ENCODE measurements at regions of chr19 and their contacts with region 1.

Region 1: GRCh38 chr19:39970675-39971379 is at the start of gene PSMC4:
- DNase-seq: peak; percentile 97 to 98
- ATAC-seq: peak; percentile 98 to 99
- H3K4me3 ChIP-seq: peak within 1 kb of the TSS; percentile 86 to 98 (median 94)
- H3K27ac ChIP-seq: peak within 1 kb of the TSS; percentile 97 to 99 (median 99)
- H3K4me1 ChIP-seq: peaks cover 21 to 23% of the 10 kb centered on the region in 2 donors
- H3K27me3 ChIP-seq: no peaks in the 10 kb centered on the region
- CTCF ChIP-seq: peak; percentile 24 to 81 (median 71)
- POLR2A ChIP-seq: peak; percentile 92 to 97
- total RNA-seq, gene PSMC4: 165 to 238 (median 219) TPM

Region 2: GRCh38 chr19:39539519-39540332 is 431.1 kb before region 1 on chr19 and contains the start of gene EID2:
- in situ Hi-C with region 1: no loop called
- intact Hi-C with region 1: loop called (anchors 5 kb)
- DNase-seq: peak; percentile 94 to 95
- ATAC-seq: peak; percentile 99
- H3K4me3 ChIP-seq: peak within 1 kb of the TSS; percentile 69 to 95 (median 84)
- H3K27ac ChIP-seq: peak within 1 kb of the TSS; percentile 87 to 96 (median 94)
- H3K4me1 ChIP-seq: peaks cover 17 to 25% of the 10 kb centered on the region in 2 donors
- H3K27me3 ChIP-seq: no peaks in the 10 kb centered on the region
- CTCF ChIP-seq: peak; percentile 51 to 95 (median 86)
- POLR2A ChIP-seq: peak; percentile 86 to 87
- total RNA-seq, gene EID2: 7.8 to 12.7 (median 9.4) TPM

Region 3: GRCh38 chr19:39679056-39679790 is 291.6 kb before region 1 on chr19:
- in situ Hi-C with region 1: no loop called
- intact Hi-C with region 1: loop called (anchors 5 kb)
- DNase-seq: peak; percentile 55 to 75
- ATAC-seq: peak; percentile 86 to 89
- H3K4me3 ChIP-seq: peak overlapping the region; percentile 19 to 36 (median 26)
- H3K27ac ChIP-seq: peak overlapping the region; percentile 85 to 95 (median 92)
- H3K4me1 ChIP-seq: peaks cover 19 to 30% of the 10 kb centered on the region in 2 donors
- H3K27me3 ChIP-seq: no peaks in the 10 kb centered on the region
- CTCF ChIP-seq: no peak
- POLR2A ChIP-seq: peak in 1 of 2 donors; percentile 50

Region 4: GRCh38 chr19:39792999-39793546 is 177.8 kb before region 1 on chr19:
- in situ Hi-C with region 1: loop called in 3 of 4 experiments (anchors 5 to 25 kb)
- intact Hi-C with region 1: loop called (anchors 1 kb)
- DNase-seq: peak; percentile 35 to 72
- ATAC-seq: peak; percentile 95 to 98
- H3K4me3 ChIP-seq: peak overlapping the region; percentile 50 to 76 (median 63)
- H3K27ac ChIP-seq: peak overlapping the region; percentile 25 to 69 (median 56)
- H3K4me1 ChIP-seq: no peaks in the 10 kb centered on the region
- H3K27me3 ChIP-seq: no peaks in the 10 kb centered on the region
- CTCF ChIP-seq: peak; percentile 93 to 96 (median 95)
- POLR2A ChIP-seq: no peak

Region 5: DNA sequence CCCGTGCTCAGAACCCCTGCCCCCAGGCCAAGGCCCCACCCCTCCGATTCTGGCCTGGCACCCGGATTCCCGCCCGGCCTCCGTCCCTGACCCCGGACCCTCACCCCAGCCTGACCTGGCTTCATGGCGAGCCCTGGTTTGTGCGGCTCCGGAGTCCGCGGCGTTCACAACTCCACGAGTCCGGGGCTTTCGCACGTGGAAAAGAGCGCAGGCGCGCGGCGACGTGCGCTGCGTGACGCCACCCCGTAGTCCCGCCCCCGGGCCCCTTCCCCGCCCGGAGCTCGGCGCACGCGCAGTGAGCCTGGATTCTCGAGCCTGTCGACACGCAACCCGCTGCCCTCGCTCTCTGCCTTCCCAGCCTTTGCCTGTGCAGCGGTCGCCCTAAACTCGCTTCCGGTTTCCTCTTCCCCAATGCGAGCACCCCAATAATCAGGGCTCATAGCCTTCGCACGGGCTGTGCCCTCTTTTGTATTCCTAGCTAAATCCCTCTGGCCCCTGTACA is 124.6 kb before region 1 on chr19 and contains the start of gene FBL:
- in situ Hi-C with region 1: loop called in 2 of 4 experiments (anchors 5 to 10 kb)
- intact Hi-C with region 1: loop called (anchors 1 kb)
- DNase-seq: peak; percentile 86 to 93
- ATAC-seq: peak; percentile 88 to 91
- H3K4me3 ChIP-seq: peak within 1 kb of the TSS; percentile 78 to 99 (median 88)
- H3K27ac ChIP-seq: peak within 1 kb of the TSS; percentile 93 to 96 (median 96)
- H3K4me1 ChIP-seq: peaks cover 38 to 50% of the 10 kb centered on the region in 2 donors
- H3K27me3 ChIP-seq: no peaks in the 10 kb centered on the region
- CTCF ChIP-seq: no peak
- POLR2A ChIP-seq: peak; percentile 72 to 75
- total RNA-seq, gene FBL: 40.4 to 79.4 (median 67.0) TPM

Region 6: GRCh38 chr19:39996811-39997594 is 26.2 kb after region 1 on chr19 and contains the start of gene ZNF546:
- in situ Hi-C with region 1: no loop called
- intact Hi-C with region 1: loop called (anchors 1 kb)
- DNase-seq: peak; percentile 85
- ATAC-seq: peak; percentile 96 to 98
- H3K4me3 ChIP-seq: peak within 1 kb of the TSS; percentile 85 to 93 (median 87)
- H3K27ac ChIP-seq: peak within 1 kb of the TSS; percentile 91 to 98 (median 92)
- H3K4me1 ChIP-seq: peaks cover 13 to 17% of the 10 kb centered on the region in 2 donors
- H3K27me3 ChIP-seq: no peaks in the 10 kb centered on the region
- CTCF ChIP-seq: no peak
- POLR2A ChIP-seq: peak; percentile 87 to 91
- total RNA-seq, gene ZNF546: 3.2 to 6.9 (median 4.2) TPM